PC-3 (cell line): ENCODE measurements at regions of chr10 and their contacts with region 1.

Region 1: DNA sequence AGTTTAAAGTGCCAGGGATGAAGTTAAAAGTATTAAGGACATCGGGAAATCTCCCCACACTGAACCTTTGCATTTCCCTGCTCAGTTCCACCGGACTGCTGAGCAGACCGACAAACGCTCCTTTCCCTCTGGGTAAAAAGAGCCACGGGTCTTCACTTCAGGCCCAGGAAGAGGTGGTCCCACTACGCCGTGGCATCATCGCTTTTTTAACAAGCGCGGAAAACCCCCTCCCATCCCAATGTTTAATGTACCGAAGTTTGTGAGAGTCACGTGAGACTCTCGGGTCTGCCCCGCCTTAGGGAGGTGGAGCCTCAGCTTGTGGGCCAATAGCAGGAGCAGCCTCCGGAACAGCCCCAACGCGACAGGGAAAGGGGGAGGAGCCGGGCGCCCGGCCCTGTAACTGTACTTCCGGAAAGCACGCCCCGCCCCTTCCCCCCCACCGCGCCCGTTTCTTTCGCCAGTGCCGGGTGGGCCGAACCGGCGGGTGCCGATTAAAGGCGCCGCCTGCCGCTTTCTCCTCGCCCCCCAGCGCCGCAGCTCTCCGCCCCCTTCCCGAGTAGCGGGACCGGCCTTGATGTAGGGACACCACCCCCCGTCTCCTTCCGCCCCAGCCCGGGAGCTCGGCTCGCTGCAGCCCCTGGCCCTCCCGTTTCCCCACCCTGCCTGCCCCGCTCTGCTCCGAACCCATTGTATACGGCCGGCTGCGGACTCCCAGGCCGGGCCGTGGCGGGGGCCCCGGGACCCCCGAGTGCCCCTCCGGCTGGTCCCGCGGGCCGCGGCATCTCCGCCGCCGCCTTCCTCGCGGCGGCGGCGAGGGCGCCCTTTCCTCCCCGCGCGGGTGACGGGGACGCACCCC is 2.2 kb upstream of the TRIM8 start:
- DNase-seq: peak; percentile 90
- ATAC-seq: peak; percentile 44
- H3K4me3 ChIP-seq: peak overlapping the region; percentile 92
- H3K27ac ChIP-seq: peak overlapping the region; percentile 37; the same call in 1 of the 2 replicates
- H3K4me1 ChIP-seq: no peaks in the 10 kb centered on the region; the same call in 1 of the 2 replicates
- H3K27me3 ChIP-seq: no peaks in the 10 kb centered on the region
- CTCF ChIP-seq: no peak

Region 2: GRCh38 chr10:102503281-102504220 is 138.6 kb before region 1 on chr10 and contains the start of gene SUFU:
- CTCF ChIA-PET with region 1: no interaction called
- POLR2A ChIA-PET with region 1: interaction called, 7 read pairs
- intact Hi-C with region 1: loop called (anchors 1 kb)
- DNase-seq: peak; percentile 97
- ATAC-seq: peak; percentile 61
- H3K4me3 ChIP-seq: peak within 1 kb of the TSS; percentile 92
- H3K27ac ChIP-seq: no peak within 1 kb of the TSS
- H3K4me1 ChIP-seq: peaks cover 22% of the 10 kb centered on the region
- H3K27me3 ChIP-seq: no peaks in the 10 kb centered on the region
- CTCF ChIP-seq: peak; percentile 72
- total RNA-seq, gene SUFU: 2.7 and 4.4 TPM in 2 replicates

Region 3: GRCh38 chr10:102583435-102584417 is 58.4 kb before region 1 on chr10:
- CTCF ChIA-PET with region 1: no interaction called
- POLR2A ChIA-PET with region 1: no interaction called
- intact Hi-C with region 1: no loop called
- DNase-seq: peak; percentile 86
- ATAC-seq: peak; percentile 97
- H3K4me3 ChIP-seq: no peak overlapping the region
- H3K27ac ChIP-seq: no peak overlapping the region
- H3K4me1 ChIP-seq: no peaks in the 10 kb centered on the region
- H3K27me3 ChIP-seq: no peaks in the 10 kb centered on the region
- CTCF ChIP-seq: peak; percentile 74

Region 4: DNA sequence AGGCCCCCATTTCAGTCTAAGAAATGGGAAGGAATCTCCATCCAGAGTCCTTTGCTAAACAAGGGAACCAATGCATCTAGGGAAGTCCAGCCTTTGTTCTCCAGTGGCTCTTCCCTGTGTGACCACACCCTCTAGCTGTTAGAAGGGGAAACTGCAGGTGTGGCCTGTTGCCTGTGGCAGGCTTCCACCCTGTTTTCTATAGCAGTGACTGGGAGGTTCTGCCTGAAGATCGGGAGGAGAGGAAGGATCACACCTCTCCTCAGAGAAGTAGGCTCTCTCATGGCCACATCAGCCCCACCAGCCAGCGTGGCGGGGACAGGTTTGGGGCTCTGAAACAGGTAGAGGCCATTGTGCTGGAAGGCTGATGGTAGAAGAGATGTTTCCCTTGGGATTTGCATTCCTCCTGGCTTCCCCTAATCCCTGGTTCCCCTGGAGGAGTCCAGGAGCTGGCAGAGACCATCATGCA is 45.6 kb before region 1 on chr10:
- CTCF ChIA-PET with region 1: no interaction called
- POLR2A ChIA-PET with region 1: no interaction called
- intact Hi-C with region 1: loop called (anchors 10 kb)
- DNase-seq: peak; percentile 68
- ATAC-seq: peak; percentile 83
- H3K4me3 ChIP-seq: no peak overlapping the region
- H3K27ac ChIP-seq: no peak overlapping the region
- H3K4me1 ChIP-seq: peaks cover 18% of the 10 kb centered on the region
- H3K27me3 ChIP-seq: no peaks in the 10 kb centered on the region
- CTCF ChIP-seq: peak; percentile 78

Region 5: GRCh38 chr10:102802920-102803534 is 160.9 kb after region 1 on chr10:
- CTCF ChIA-PET with region 1: no interaction called
- POLR2A ChIA-PET with region 1: no interaction called
- intact Hi-C with region 1: no loop called
- DNase-seq: peak; percentile 7
- ATAC-seq: no peak
- H3K4me3 ChIP-seq: no peak overlapping the region
- H3K27ac ChIP-seq: no peak overlapping the region
- H3K4me1 ChIP-seq: no peaks in the 10 kb centered on the region
- H3K27me3 ChIP-seq: no peaks in the 10 kb centered on the region
- CTCF ChIP-seq: no peak

Region 6: DNA sequence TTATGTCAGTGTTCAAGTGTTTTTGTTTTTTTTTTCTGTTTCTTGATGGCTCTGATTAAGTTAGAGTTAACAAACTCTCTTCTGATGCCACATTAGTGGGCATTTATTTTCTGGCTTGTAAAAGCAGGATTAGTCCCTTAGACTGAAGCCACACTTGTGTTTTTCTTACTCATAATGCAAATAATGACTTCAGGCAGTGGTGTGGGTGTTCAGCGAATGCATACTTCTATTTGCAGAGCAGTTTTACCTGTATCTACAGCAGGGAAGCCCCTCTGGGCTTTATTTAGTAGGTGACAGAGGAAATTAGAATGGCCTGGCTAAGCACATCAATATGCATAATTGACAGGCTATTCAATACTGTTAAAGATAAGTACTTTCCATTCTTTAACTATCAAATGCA is 355.9 kb after region 1 on chr10:
- CTCF ChIA-PET with region 1: no interaction called
- POLR2A ChIA-PET with region 1: no interaction called
- intact Hi-C with region 1: no loop called
- DNase-seq: peak; percentile 77
- ATAC-seq: peak; percentile 97
- H3K4me3 ChIP-seq: peak overlapping the region; percentile 32; the same call in 1 of the 2 replicates
- H3K27ac ChIP-seq: peak overlapping the region; percentile 55
- H3K4me1 ChIP-seq: peaks cover 20% of the 10 kb centered on the region
- H3K27me3 ChIP-seq: no peaks in the 10 kb centered on the region
- CTCF ChIP-seq: no peak